ENCODE measurements at regions of chr17 and their contacts with region 1.

Region 1: DNA sequence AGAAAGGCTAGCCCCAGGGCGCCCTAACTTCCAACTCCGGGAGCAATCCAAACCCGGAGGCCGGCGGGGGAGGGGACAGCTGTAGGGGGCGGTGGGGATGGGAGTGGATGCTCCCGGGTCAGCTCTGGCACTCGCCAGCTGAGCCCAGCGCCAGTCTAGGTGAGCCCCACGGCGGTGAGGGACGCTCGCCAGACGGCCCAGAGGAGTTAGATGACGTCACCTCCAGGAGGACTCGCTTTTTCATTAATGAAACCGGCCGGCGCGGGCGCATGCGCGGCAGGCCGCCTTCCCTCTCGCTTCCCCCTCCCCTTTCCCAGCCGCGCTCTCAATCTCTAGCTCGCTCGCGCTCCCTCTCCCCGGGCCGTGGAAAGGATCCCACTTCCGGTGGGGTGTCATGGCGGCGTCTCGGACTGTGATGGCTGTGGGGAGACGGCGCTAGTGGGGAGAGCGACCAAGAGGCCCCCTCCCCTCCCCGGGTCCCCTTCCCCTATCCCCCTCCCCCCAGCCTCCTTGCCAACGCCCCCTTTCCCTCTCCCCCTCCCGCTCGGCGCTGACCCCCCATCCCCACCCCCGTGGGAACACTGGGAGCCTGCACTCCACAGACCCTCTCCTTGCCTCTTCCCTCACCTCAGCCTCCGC is at the start of gene NF1:
- DNase-seq: peak; percentile 93
- H3K4me3 ChIP-seq: peak within 1 kb of the TSS; percentile 90
- H3K27ac ChIP-seq: peak within 1 kb of the TSS; percentile 89
- H3K4me1 ChIP-seq: no peaks in the 10 kb centered on the region
- H3K27me3 ChIP-seq: no peaks in the 10 kb centered on the region
- CTCF ChIP-seq: no peak
- total RNA-seq, gene NF1: 32.1 and 36.5 TPM in 2 replicates

Region 2: GRCh38 chr17:31061678-31062077 is 33.0 kb before region 1 on chr17:
- CTCF ChIA-PET with region 1: no interaction called
- POLR2A ChIA-PET with region 1: no interaction called
- intact Hi-C with region 1: no loop called
- DNase-seq: no peak
- H3K4me3 ChIP-seq: no peak overlapping the region
- H3K27ac ChIP-seq: no peak overlapping the region
- H3K4me1 ChIP-seq: no peaks in the 10 kb centered on the region
- H3K27me3 ChIP-seq: no peaks in the 10 kb centered on the region
- CTCF ChIP-seq: peak; percentile 27; the same call in 1 of the 2 replicates

Region 3: GRCh38 chr17:31130286-31131224 is 35.8 kb after region 1 on chr17:
- CTCF ChIA-PET with region 1: no interaction called
- POLR2A ChIA-PET with region 1: interaction called, 11 read pairs
- intact Hi-C with region 1: no loop called
- DNase-seq: no peak
- H3K4me3 ChIP-seq: no peak overlapping the region
- H3K27ac ChIP-seq: no peak overlapping the region
- H3K4me1 ChIP-seq: no peaks in the 10 kb centered on the region
- H3K27me3 ChIP-seq: no peaks in the 10 kb centered on the region
- CTCF ChIP-seq: no peak

Region 4: DNA sequence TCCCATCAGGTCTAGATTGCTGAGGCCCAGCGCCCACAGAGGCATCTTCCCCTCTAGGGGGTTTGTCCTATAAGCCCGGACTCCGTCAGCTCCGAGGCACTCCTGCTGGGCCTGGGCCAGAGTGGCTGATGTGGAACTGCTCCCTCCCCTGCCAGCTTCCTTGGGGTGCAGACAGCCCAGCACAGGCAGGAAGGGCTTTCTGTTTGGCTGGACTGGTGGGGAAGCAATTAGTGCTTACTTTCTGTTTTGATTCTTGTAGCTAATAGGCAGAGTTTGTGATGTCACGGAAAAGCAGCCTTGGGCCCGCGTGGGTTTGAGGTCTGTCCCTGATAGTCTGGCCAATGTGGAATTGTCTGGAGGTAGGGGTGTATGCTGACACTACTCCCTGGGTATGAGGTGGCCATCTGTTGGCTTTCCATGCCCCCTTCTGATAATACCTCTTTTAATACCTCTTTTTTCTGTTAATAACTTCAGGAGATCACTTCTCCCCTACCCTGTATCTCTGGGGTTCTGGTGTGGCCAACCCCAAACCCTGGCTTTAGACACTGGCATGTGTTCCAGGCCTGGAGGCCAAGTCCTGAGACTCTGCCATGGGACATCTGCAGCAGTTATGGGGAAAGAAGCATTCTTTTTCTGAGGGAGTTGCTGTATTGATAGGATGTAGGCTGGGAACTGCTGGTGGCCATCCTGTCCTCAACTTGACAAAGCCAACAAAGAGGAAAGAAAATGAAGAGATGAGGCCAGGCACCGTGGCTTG is 487.6 kb after region 1 on chr17:
- CTCF ChIA-PET with region 1: no interaction called
- POLR2A ChIA-PET with region 1: interaction called, 21 read pairs
- intact Hi-C with region 1: no loop called
- DNase-seq: no peak
- H3K4me3 ChIP-seq: no peak overlapping the region
- H3K27ac ChIP-seq: no peak overlapping the region
- H3K4me1 ChIP-seq: no peaks in the 10 kb centered on the region
- H3K27me3 ChIP-seq: no peaks in the 10 kb centered on the region
- CTCF ChIP-seq: no peak